HCT116 (cell line): ENCODE measurements at regions of chr2 and their contacts with region 1.

Region 1: GRCh38 chr2:73290049-73290839 is 3.1 kb downstream of the EGR4 start:
- DNase-seq: no peak
- ATAC-seq: peak; percentile 64
- H3K4me3 ChIP-seq: no peak overlapping the region
- H3K27ac ChIP-seq: no peak overlapping the region
- H3K4me1 ChIP-seq: peaks cover 7 to 21% of the 10 kb centered on the region in 2 experiments
- H3K27me3 ChIP-seq: peaks cover 3% of the 10 kb centered on the region; the same call in 1 of the 2 replicates
- CTCF ChIP-seq: peak; percentile 60 to 91 (median 86)
- POLR2A ChIP-seq: no peak
- RAD21 ChIP-seq: peak; percentile 62

Region 2: GRCh38 chr2:72813841-72814240 is 476.4 kb before region 1 on chr2:
- CTCF ChIA-PET with region 1: no interaction called
- POLR2A ChIA-PET with region 1: no interaction called
- RAD21 ChIA-PET with region 1: no interaction called
- intact Hi-C with region 1: no loop called
- DNase-seq: no peak
- ATAC-seq: no peak
- H3K4me3 ChIP-seq: no peak overlapping the region
- H3K27ac ChIP-seq: no peak overlapping the region
- H3K4me1 ChIP-seq: no peaks in the 10 kb centered on the region
- H3K27me3 ChIP-seq: no peaks in the 10 kb centered on the region
- CTCF ChIP-seq: no peak
- POLR2A ChIP-seq: no peak
- RAD21 ChIP-seq: no peak

Region 3: DNA sequence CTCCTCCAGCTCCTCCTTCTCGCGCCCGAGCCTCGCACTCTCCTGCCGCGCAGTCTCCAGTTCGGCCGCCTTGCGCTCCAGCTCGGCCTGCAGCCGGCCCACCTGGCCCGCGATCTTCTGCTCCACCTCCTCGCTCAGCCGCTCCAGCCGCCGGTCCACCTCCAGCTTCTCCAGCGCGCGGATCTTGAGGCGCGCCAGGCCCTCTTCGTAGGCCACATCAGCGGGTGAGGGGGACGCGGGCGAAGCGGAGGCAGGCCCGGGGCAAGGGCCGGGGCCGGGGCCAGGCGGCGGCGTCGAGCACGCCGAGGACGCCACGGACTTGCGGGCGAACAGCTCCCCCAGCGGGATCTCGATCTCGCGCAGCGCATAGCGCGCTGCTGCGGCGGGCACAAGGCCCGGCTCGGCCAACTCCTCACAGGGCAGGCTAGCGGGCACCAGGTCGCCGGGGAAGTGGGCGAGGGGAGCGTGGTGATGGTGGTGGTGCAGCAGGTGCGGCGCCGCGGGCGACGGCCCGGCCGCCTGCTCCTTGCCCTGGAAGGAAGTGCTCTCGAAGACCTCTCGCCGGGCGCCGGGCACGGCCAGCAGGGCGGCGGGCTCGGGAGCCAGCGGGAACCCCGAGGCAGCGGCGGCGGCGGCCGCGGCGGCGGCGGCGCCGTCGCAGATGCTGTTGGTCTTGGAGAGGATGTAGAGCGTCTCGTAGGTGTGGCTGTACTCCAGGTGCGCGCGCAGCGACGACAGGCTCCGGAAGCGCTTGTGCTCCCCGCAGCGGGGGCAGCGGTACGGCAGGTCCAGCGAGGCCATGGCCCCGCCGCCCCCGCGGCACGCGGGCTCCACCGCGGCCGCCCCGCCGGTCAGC is 21.2 kb before region 1 on chr2:
- CTCF ChIA-PET with region 1: interaction called, 10 read pairs
- POLR2A ChIA-PET with region 1: interaction called, 8 read pairs
- RAD21 ChIA-PET with region 1: no interaction called
- intact Hi-C with region 1: no loop called
- DNase-seq: peak; percentile 82
- ATAC-seq: peak; percentile 85
- H3K4me3 ChIP-seq: peak overlapping the region; percentile 72 to 75
- H3K27ac ChIP-seq: peak overlapping the region; percentile 94
- H3K4me1 ChIP-seq: peaks cover 8 to 33% of the 10 kb centered on the region in 2 experiments
- H3K27me3 ChIP-seq: no peaks in the 10 kb centered on the region
- CTCF ChIP-seq: peak in 2 of 3 experiments; percentile 36 to 37; a peak in 4 of 6 replicates
- POLR2A ChIP-seq: peak; percentile 68
- RAD21 ChIP-seq: no peak; the same call in 1 of the 2 replicates

Region 4: GRCh38 chr2:73359915-73360697 is 69.9 kb after region 1 on chr2:
- CTCF ChIA-PET with region 1: interaction called, 13 read pairs
- POLR2A ChIA-PET with region 1: no interaction called
- RAD21 ChIA-PET with region 1: no interaction called
- intact Hi-C with region 1: no loop called
- DNase-seq: no peak
- ATAC-seq: peak; percentile 50; the same call in 1 of the 2 replicates
- H3K4me3 ChIP-seq: no peak overlapping the region
- H3K27ac ChIP-seq: no peak overlapping the region
- H3K4me1 ChIP-seq: no peaks in the 10 kb centered on the region
- H3K27me3 ChIP-seq: no peaks in the 10 kb centered on the region
- CTCF ChIP-seq: peak; percentile 38 to 62 (median 50); a peak in 5 of 6 replicates
- POLR2A ChIP-seq: no peak
- RAD21 ChIP-seq: peak; percentile 56

Region 5: DNA sequence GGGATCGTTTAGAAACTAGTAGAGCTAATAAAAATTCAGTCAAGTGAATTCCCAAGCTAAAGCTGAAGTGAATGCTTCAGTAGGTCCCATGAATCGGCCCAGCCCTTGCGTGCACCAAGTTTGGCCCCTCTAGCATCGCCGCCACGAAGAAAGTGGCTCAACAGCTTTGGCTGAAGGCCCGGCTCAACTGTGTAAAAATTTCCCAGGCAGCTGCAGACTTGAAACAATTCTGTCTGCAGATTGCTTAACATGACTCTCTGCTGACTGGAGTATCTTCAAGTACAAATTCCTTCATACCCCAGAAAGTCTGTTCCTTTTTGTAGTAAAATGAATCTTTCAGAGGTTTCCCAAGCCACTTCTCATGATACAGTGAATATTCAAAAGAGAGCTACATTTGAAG is 128.1 kb after region 1 on chr2:
- CTCF ChIA-PET with region 1: no interaction called
- POLR2A ChIA-PET with region 1: no interaction called
- RAD21 ChIA-PET with region 1: no interaction called
- intact Hi-C with region 1: no loop called
- DNase-seq: no peak
- ATAC-seq: no peak
- H3K4me3 ChIP-seq: no peak overlapping the region
- H3K27ac ChIP-seq: no peak overlapping the region
- H3K4me1 ChIP-seq: no peaks in the 10 kb centered on the region
- H3K27me3 ChIP-seq: no peaks in the 10 kb centered on the region
- CTCF ChIP-seq: no peak
- POLR2A ChIP-seq: no peak
- RAD21 ChIP-seq: no peak

Region 6: GRCh38 chr2:73503992-73504570 is 213.8 kb after region 1 on chr2:
- CTCF ChIA-PET with region 1: no interaction called
- POLR2A ChIA-PET with region 1: no interaction called
- RAD21 ChIA-PET with region 1: no interaction called
- intact Hi-C with region 1: no loop called
- DNase-seq: no peak
- ATAC-seq: peak; percentile 83
- H3K4me3 ChIP-seq: peak overlapping the region in 1 of 2 experiments; percentile 21; a peak in 1 of 4 replicates
- H3K27ac ChIP-seq: no peak overlapping the region
- H3K4me1 ChIP-seq: peaks cover 7 to 12% of the 10 kb centered on the region in 2 experiments; a peak in 3 of 4 replicates
- H3K27me3 ChIP-seq: no peaks in the 10 kb centered on the region
- CTCF ChIP-seq: no peak
- POLR2A ChIP-seq: no peak
- RAD21 ChIP-seq: no peak

Region 7: GRCh38 chr2:74066518-74067203 is 776.4 kb after region 1 on chr2:
- CTCF ChIA-PET with region 1: no interaction called
- POLR2A ChIA-PET with region 1: no interaction called
- RAD21 ChIA-PET with region 1: no interaction called
- intact Hi-C with region 1: no loop called
- DNase-seq: no peak
- ATAC-seq: no peak
- H3K4me3 ChIP-seq: no peak overlapping the region
- H3K27ac ChIP-seq: no peak overlapping the region
- H3K4me1 ChIP-seq: no peaks in the 10 kb centered on the region
- H3K27me3 ChIP-seq: no peaks in the 10 kb centered on the region
- CTCF ChIP-seq: no peak
- POLR2A ChIP-seq: no peak
- RAD21 ChIP-seq: no peak